Cardiac septum (tissue), 1 donor: ENCODE measurements at regions of chr5 and their contacts with region 1.

Region 1: GRCh38 chr5:21244982-21245381 is 1257.0 kb upstream of the CDH18 start:
- DNase-seq: no peak

Region 2: GRCh38 chr5:21209409-21209808 is 35.6 kb before region 1 on chr5:
- intact Hi-C with region 1: no loop called
- DNase-seq: no peak

Region 3: DNA sequence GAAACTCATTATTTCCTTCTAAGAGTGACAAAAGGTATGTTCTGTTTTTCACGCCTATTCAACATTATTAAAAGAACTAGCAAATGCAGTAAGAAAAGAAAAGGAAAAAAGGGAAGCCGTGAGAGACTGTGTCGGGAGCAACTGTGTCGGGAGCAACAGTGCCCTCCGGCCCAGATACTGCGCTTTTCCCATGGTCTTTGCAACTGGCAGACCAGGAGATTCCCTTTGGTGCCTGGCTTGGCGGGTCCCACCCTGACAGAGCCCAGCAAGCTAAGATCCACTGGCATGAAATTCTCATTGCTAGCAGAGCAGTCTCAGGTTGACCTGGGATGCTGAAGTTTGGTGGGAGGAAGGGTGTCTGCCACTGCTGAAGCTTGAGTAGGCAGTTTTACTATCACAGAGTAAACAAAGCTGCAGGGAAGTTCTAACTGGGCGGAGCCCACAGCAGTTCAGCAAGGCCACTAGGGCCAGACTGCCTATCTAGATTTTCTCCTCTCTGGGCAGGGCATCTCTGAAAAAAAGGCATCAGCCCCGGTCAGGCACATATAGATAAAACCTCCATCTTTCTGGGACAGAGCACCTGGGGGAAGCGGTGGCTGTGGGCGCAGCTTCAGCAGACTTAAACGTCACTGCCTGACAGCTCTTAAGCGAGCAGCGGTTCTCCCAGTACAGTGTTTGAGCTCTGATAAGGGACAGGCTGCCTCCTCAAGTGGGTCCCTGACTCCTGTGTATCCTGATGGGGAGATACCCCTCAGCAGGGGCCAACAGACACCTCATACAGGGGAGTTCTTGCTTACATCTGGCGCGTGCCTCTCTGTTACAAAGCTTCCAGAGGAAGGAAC is 19.5 kb before region 1 on chr5:
- intact Hi-C with region 1: loop called (anchors 2 kb)
- DNase-seq: no peak